ENCODE measurements at regions of chr17 and their contacts with region 1.

Region 1: GRCh38 chr17:4420692-4421131 is 13.0 kb upstream of the SPNS3 start:
- DNase-seq: peak; percentile 90
- H3K4me3 Mint-ChIP-seq: no peak overlapping the region
- H3K27ac Mint-ChIP-seq: no peak overlapping the region
- H3K4me1 Mint-ChIP-seq: peaks cover 3% of the 10 kb centered on the region
- H3K27me3 Mint-ChIP-seq: peaks cover 5% of the 10 kb centered on the region

Region 2: DNA sequence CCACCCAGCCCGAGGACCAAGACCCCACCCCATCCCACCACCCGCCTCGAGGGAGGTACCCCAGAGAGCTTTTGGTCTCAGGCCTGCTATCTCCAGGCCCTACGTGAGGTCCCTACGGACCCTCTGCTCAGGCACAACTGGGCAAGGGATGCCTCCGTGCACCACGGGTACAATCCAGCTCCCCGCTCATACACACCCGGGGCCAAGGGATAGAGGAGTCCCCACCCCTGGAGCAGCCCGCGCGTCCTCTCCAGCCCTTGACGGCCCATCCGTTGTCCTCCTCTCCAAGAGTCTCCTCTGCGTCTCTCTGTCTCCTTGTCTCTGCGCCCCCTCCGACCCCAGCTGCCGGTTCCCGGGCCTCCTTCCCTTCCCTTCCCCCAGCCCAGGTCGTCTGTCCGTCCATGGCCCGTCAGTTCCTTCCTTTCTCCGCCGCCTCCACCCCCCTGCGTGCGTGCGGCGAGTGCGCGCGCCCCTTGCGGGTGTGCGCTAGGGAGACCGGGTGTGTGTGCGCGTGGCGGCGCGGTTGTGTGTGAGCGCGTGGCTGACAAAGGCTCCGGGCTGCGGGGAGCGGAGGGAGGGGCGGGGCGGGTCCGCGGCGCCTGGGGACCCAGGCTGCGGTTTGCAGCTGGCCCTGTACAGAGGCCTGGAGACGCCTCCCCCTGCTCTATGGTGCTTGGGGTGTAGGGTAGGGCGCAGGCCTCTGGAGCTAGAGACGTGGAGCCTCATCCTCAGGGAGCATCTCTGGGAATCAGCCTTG is 78.9 kb after region 1 on chr17:
- intact Hi-C with region 1: loop called (anchors 2 kb)
- DNase-seq: peak; percentile 80
- H3K4me3 Mint-ChIP-seq: peak overlapping the region; percentile 80
- H3K27ac Mint-ChIP-seq: no peak overlapping the region
- H3K4me1 Mint-ChIP-seq: peaks cover 24% of the 10 kb centered on the region
- H3K27me3 Mint-ChIP-seq: peaks cover 41% of the 10 kb centered on the region

Region 3: GRCh38 chr17:4534026-4534914 is 113.6 kb after region 1 on chr17:
- intact Hi-C with region 1: loop called (anchors 10 kb)
- DNase-seq: no peak
- H3K4me3 Mint-ChIP-seq: no peak overlapping the region
- H3K27ac Mint-ChIP-seq: no peak overlapping the region
- H3K4me1 Mint-ChIP-seq: peaks cover 4% of the 10 kb centered on the region
- H3K27me3 Mint-ChIP-seq: peaks cover 5% of the 10 kb centered on the region

Region 4: GRCh38 chr17:4626734-4627256 is 206.1 kb after region 1 on chr17:
- intact Hi-C with region 1: loop called (anchors 2 kb)
- DNase-seq: no peak
- H3K4me3 Mint-ChIP-seq: no peak overlapping the region
- H3K27ac Mint-ChIP-seq: no peak overlapping the region
- H3K4me1 Mint-ChIP-seq: peaks cover 6% of the 10 kb centered on the region
- H3K27me3 Mint-ChIP-seq: peaks cover 39% of the 10 kb centered on the region

Region 5: DNA sequence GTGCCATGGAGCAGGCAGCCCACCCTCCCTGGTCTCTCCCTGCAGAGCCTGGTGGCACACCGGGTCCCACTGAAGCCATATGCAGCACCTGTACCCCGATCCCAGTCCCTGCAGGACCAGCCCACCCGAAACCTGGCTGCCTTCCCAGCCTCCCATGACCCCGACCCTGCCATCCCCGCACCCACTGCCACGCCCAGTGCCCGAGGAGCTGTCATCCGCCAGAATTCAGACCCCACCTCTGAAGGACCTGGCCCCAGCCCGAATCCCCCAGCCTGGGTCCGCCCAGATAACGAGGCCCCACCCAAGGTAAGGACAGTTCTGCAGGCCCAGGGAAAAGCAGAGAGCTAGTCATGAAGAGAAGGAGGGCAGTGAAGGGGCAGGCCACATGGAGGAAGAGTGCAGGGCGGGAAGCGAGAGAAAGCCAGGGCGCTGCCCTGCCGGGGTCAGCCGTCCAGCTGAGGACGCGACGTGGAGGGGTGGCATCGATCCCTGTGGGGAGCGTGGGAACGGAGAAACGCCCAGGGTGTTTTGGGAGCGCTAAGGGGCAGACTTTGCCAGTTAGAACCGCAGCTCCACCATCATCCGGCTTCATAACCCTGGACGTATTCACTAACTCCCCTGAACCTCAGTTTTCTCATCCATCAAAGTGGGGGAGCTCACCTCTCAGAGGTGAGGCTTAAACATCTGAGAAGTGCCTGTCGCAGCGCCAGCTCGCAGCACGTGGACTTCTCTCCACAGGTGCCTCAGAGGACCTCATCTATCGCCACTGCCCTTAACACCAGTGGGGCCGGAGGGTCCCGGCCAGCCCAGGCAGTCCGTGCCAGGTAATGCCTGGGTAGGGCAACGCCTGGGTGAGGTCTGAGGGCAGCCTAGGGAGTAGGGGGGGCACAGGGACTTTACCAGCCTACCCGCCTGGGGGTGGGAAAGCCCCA is 471.0 kb after region 1 on chr17:
- intact Hi-C with region 1: loop called (anchors 2 kb)
- DNase-seq: no peak
- H3K4me3 Mint-ChIP-seq: no peak overlapping the region
- H3K27ac Mint-ChIP-seq: no peak overlapping the region
- H3K4me1 Mint-ChIP-seq: no peaks in the 10 kb centered on the region
- H3K27me3 Mint-ChIP-seq: no peaks in the 10 kb centered on the region

Measured in activated CD4-positive, alpha-beta T cell treated with anti-CD3 and anti-CD28 coated beads, Interleukin-2, amount 10 ng/mL, durations not matched to agents 24 days and 14 days (primary cell).